ENCODE measurements at regions of chr17 and their contacts with region 1.

Region 1: DNA sequence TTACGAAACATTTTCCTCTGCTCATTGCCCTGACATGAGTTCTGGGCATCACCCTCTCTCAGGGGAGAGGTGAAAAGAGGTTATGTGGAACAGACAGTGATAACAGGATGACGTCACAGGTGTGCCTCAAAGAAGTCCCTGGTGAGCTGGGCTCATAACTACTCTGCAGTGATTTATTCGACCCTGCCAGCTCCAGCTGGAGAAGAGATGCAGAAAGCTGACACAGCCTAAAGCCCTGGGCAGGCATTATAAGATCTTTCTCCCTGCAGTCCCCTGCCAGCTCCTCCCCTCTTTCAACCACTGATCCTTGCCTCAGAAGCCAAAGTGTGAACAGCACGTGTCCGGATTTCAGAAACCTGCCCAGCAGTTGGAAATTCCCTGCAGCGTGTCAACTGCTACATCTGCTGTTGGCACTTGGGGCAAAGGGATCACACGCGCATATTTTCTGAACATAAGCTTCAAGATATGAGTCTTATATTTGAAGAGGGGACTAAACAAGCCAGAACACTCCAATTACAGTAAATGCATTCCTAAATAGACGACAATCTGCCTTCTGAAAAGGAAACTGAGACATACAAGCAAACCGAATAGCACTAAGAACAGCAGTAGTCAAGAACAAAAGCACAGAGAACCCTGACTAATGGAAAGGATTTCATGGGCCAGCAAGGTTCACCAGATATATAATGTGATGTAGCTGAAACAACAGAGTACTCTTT is 80.5 kb downstream of the SMG6 start:
- DNase-seq: peak; percentile 88
- H3K4me3 Mint-ChIP-seq: peak overlapping the region; percentile 43
- H3K27ac Mint-ChIP-seq: peak overlapping the region; percentile 88
- H3K4me1 Mint-ChIP-seq: peaks cover 45% of the 10 kb centered on the region
- H3K27me3 Mint-ChIP-seq: no peaks in the 10 kb centered on the region

Region 2: DNA sequence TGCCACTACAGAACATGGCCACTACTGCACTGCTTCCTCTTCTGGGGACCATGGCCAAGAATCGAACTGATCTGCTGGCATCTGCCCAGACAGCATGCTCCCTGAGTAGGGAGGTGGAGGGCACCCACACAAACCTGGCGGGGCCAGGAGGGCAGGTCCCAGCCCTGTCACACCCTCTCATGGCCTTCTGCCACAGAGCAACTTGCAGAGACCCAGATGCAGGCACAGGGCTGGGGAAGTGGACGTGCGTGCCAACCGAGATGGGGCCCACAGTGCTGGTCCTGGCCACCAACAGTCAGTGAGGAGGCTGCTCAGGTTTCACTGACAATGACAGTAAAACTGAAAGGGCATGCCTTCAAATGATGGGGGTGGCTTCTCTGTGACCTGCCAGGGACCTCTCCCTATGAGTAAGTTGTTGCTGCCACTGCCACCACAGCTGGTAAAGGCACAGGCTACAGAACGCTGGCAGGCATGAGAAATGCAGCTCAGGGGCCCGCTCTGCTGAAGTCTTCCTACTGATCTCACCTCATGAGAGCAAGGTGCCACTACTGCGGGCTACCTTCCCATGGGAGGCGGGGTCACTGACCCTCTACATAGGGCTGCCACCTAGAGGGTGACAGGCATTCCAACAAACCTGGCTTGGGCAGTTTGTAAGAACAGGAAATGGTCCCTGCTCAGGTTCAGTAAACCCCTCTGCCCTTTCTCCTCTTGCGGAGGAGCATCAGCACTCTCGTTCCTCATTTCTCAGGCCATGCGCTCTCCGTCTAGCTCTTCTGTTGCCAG is 152.6 kb before region 1 on chr17:
- intact Hi-C with region 1: loop called (anchors 1 kb)
- DNase-seq: peak; percentile 89
- H3K4me3 Mint-ChIP-seq: peak overlapping the region; percentile 74
- H3K27ac Mint-ChIP-seq: peak overlapping the region; percentile 97
- H3K4me1 Mint-ChIP-seq: peaks cover 58% of the 10 kb centered on the region
- H3K27me3 Mint-ChIP-seq: no peaks in the 10 kb centered on the region

Region 3: DNA sequence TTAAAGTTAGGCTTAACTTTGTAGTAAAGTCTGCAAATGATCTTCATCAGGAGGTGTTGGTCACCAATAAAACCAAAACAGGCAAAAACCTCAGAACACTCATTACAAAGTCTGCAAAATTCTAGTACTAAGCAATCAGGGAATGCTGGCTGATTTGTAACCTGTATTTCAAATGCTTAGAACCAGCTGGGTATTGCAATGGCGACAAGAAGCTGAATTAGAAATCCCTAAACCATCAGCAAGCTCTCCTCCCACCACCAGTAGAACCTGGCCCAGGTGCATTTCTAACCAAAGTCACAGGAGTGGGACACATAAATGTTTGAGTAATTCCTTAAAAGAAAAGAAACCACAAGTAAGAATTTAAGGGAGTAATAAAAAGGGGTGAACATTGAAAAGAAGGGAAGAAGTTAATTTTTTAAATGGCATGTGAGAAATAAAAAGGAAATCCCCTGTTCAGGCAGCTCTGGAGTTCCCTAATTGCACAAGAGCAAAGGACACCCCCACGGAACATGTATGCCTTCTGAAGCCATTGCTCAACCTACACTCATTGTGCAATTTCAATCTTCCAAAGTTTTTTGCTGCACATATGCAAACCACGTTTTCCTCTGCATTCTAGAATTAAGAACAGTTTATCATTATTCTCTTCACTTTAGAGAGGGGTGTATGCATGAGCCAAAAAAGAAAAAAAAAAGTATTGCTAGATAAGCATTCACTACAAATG is 65.2 kb before region 1 on chr17:
- intact Hi-C with region 1: loop called (anchors 5 kb)
- DNase-seq: no peak
- H3K4me3 Mint-ChIP-seq: peak overlapping the region; percentile 21
- H3K27ac Mint-ChIP-seq: peak overlapping the region; percentile 60
- H3K4me1 Mint-ChIP-seq: peaks cover 33% of the 10 kb centered on the region
- H3K27me3 Mint-ChIP-seq: no peaks in the 10 kb centered on the region

Measured in activated CD4-positive, alpha-beta T cell treated with anti-CD3 and anti-CD28 coated beads, Interleukin-2, amount 10 ng/mL, durations not matched to agents 24 days and 14 days (primary cell).